ENCODE measurements at regions of chr3 and their contacts with region 1.

Region 1: DNA sequence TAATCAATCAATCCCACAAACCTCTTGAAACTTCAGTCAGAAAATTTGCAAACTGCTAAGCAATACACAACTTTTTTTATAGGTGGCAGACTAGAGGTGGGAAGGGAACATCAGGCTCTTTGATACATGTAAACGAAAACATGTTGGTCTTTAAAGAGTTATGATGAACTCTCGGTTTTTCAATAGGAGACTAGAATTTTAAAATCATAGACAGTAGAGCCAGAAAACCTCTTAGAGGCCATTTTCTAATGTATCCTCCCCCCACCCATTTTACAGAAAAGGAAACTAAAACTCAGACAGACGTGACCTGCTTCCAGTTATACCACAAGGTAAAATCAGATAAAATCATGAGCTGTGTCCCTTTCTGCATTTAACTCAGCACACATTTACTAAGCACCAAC is 179.1 kb upstream of the LPP start:
- DNase-seq: peak in 3 of 14 experiments; percentile 68 to 78 (median 73)
- ATAC-seq: peak; percentile 64
- H3K4me3 ChIP-seq: peak overlapping the region; percentile 24
- H3K4me3 Mint-ChIP-seq: peak overlapping the region; percentile 43
- H3K27ac ChIP-seq: peak overlapping the region; percentile 39 to 65
- H3K27ac Mint-ChIP-seq: peak overlapping the region; percentile 84
- H3K4me1 ChIP-seq: peaks cover 50% of the 10 kb centered on the region
- H3K4me1 Mint-ChIP-seq: peaks cover 54% of the 10 kb centered on the region
- H3K27me3 ChIP-seq: no peaks in the 10 kb centered on the region
- H3K27me3 Mint-ChIP-seq: no peaks in the 10 kb centered on the region
- CTCF ChIP-seq: peak; percentile 56

Region 2: GRCh38 chr3:187669675-187670504 is 305.0 kb before region 1 on chr3 and contains the start of gene SST:
- CTCF ChIA-PET with region 1: no interaction called
- POLR2A ChIA-PET with region 1: no interaction called
- intact Hi-C with region 1: no loop called
- DNase-seq: peak in 3 of 14 experiments; percentile 3 to 19 (median 9)
- ATAC-seq: no peak
- H3K4me3 ChIP-seq: no peak within 1 kb of the TSS
- H3K4me3 Mint-ChIP-seq: no peak within 1 kb of the TSS
- H3K27ac ChIP-seq: no peak within 1 kb of the TSS
- H3K27ac Mint-ChIP-seq: no peak within 1 kb of the TSS
- H3K4me1 ChIP-seq: no peaks in the 10 kb centered on the region
- H3K4me1 Mint-ChIP-seq: no peaks in the 10 kb centered on the region
- H3K27me3 ChIP-seq: peaks cover 22 to 61% of the 10 kb centered on the region in 2 experiments
- H3K27me3 Mint-ChIP-seq: peaks cover 86% of the 10 kb centered on the region
- CTCF ChIP-seq: no peak
- total RNA-seq, gene SST: not detected

Region 3: GRCh38 chr3:187919048-187919447 is 55.8 kb before region 1 on chr3:
- CTCF ChIA-PET with region 1: no interaction called
- POLR2A ChIA-PET with region 1: no interaction called
- intact Hi-C with region 1: loop called in 1 of 2 experiments (anchors 2 kb)
- DNase-seq: peak; percentile 20 to 84 (median 45)
- ATAC-seq: peak; percentile 87
- H3K4me3 ChIP-seq: peak overlapping the region; percentile 30
- H3K4me3 Mint-ChIP-seq: peak overlapping the region; percentile 82
- H3K27ac ChIP-seq: peak overlapping the region; percentile 8 to 53
- H3K27ac Mint-ChIP-seq: peak overlapping the region; percentile 85
- H3K4me1 ChIP-seq: peaks cover 22% of the 10 kb centered on the region
- H3K4me1 Mint-ChIP-seq: peaks cover 56% of the 10 kb centered on the region
- H3K27me3 ChIP-seq: no peaks in the 10 kb centered on the region
- H3K27me3 Mint-ChIP-seq: no peaks in the 10 kb centered on the region
- CTCF ChIP-seq: no peak

Region 4: DNA sequence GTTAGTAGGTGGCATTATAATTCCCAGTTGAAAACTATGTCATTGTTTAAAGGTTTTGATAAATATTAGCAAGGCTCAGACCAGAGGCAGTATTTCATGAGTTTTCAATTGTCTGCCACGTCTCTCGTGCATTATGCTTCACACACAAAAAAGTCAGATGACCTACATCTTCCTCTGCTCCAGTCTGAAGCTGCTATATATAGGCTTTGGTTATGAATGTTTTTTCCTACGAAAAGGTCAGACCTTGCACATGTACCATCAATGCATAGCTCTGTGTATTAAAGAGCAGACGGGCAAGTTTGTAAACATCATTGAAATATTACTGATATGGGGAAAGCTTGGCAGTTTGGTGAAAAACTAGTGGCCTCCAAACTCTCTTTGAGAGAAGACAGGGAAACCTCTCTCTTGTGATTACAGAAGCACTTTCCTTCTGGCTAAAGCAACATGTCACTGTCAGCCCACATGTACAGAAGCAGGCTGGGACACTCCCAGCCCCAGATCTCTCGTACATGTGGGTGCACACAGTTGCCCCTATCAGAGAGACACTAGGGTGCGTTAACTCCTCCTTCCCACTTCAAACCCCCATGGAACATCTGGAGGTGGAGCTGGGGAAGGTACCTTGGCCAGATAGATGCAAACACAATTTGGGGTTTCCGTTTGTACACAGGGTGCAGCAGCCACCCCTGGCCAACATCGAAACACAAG is 45.6 kb before region 1 on chr3:
- CTCF ChIA-PET with region 1: no interaction called
- POLR2A ChIA-PET with region 1: no interaction called
- intact Hi-C with region 1: no loop called
- DNase-seq: peak in 1 of 14 experiments; percentile 12
- ATAC-seq: no peak
- H3K4me3 ChIP-seq: no peak overlapping the region
- H3K4me3 Mint-ChIP-seq: no peak overlapping the region
- H3K27ac ChIP-seq: no peak overlapping the region
- H3K27ac Mint-ChIP-seq: no peak overlapping the region
- H3K4me1 ChIP-seq: peaks cover 9% of the 10 kb centered on the region
- H3K4me1 Mint-ChIP-seq: peaks cover 34% of the 10 kb centered on the region
- H3K27me3 ChIP-seq: no peaks in the 10 kb centered on the region
- H3K27me3 Mint-ChIP-seq: no peaks in the 10 kb centered on the region
- CTCF ChIP-seq: no peak

Region 5: GRCh38 chr3:188164248-188164687 is 189.4 kb after region 1 on chr3:
- CTCF ChIA-PET with region 1: interaction called, 3 read pairs
- POLR2A ChIA-PET with region 1: no interaction called
- intact Hi-C with region 1: loop called in 1 of 2 experiments (anchors 5 kb)
- DNase-seq: peak in 4 of 14 experiments; percentile 20 to 37 (median 25)
- ATAC-seq: peak; percentile 39
- H3K4me3 ChIP-seq: no peak overlapping the region
- H3K4me3 Mint-ChIP-seq: peak overlapping the region; percentile 23
- H3K27ac ChIP-seq: no peak overlapping the region
- H3K27ac Mint-ChIP-seq: no peak overlapping the region
- H3K4me1 ChIP-seq: peaks cover 23% of the 10 kb centered on the region
- H3K4me1 Mint-ChIP-seq: peaks cover 47% of the 10 kb centered on the region
- H3K27me3 ChIP-seq: no peaks in the 10 kb centered on the region
- H3K27me3 Mint-ChIP-seq: no peaks in the 10 kb centered on the region
- CTCF ChIP-seq: no peak